ENCODE measurements at regions of chr10 and their contacts with region 1.

Region 1: GRCh38 chr10:86755740-86756510 is 494 bp upstream of the BMPR1A start:
- DNase-seq: peak; percentile 61 to 62
- H3K4me3 ChIP-seq: peak overlapping the region; percentile 78
- H3K27ac ChIP-seq: peak overlapping the region; percentile 56
- H3K4me1 ChIP-seq: peaks cover 26% of the 10 kb centered on the region
- H3K27me3 ChIP-seq: no peaks in the 10 kb centered on the region
- CTCF ChIP-seq: no peak

Region 2: GRCh38 chr10:86110156-86110786 is 645.7 kb before region 1 on chr10:
- CTCF ChIA-PET with region 1: no interaction called
- POLR2A ChIA-PET with region 1: no interaction called
- intact Hi-C with region 1: no loop called
- DNase-seq: no peak
- H3K4me3 ChIP-seq: no peak overlapping the region
- H3K27ac ChIP-seq: no peak overlapping the region
- H3K4me1 ChIP-seq: no peaks in the 10 kb centered on the region
- H3K27me3 ChIP-seq: peaks cover 6% of the 10 kb centered on the region
- CTCF ChIP-seq: no peak; the same call in 1 of the 2 replicates

Region 3: GRCh38 chr10:86710987-86711512 is 44.9 kb before region 1 on chr10:
- CTCF ChIA-PET with region 1: no interaction called
- POLR2A ChIA-PET with region 1: no interaction called
- intact Hi-C with region 1: loop called (anchors 5 kb)
- DNase-seq: peak; percentile 56 to 85
- H3K4me3 ChIP-seq: peak overlapping the region; percentile 78; the same call in 1 of the 2 replicates
- H3K27ac ChIP-seq: peak overlapping the region; percentile 34; the same call in 1 of the 2 replicates
- H3K4me1 ChIP-seq: no peaks in the 10 kb centered on the region
- H3K27me3 ChIP-seq: no peaks in the 10 kb centered on the region
- CTCF ChIP-seq: peak; percentile 70

Region 4: DNA sequence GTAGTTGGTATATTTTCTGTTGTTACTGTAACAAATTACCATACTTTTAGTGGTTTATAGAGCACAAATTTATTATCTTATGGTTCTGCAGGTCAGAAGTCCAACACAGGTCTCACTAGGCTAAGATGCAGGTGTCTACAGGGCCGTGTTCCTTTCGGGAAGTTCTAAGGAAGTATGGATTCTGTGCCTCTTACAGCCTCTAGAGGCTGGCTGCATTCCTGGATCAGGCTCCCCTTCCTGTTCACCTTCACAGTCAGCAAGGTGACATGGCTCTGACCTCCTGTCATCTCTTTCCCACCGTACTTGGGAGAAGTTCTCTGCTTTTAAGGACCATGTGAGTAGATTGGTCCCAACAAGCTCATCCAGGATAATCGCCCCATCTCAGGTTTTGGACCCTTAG is 37.8 kb after region 1 on chr10:
- CTCF ChIA-PET with region 1: interaction called, 3 read pairs
- POLR2A ChIA-PET with region 1: interaction called, 6 read pairs
- intact Hi-C with region 1: loop called (anchors 5 kb)
- DNase-seq: no peak
- H3K4me3 ChIP-seq: no peak overlapping the region
- H3K27ac ChIP-seq: no peak overlapping the region
- H3K4me1 ChIP-seq: peaks cover 9% of the 10 kb centered on the region
- H3K27me3 ChIP-seq: no peaks in the 10 kb centered on the region
- CTCF ChIP-seq: no peak

Region 5: DNA sequence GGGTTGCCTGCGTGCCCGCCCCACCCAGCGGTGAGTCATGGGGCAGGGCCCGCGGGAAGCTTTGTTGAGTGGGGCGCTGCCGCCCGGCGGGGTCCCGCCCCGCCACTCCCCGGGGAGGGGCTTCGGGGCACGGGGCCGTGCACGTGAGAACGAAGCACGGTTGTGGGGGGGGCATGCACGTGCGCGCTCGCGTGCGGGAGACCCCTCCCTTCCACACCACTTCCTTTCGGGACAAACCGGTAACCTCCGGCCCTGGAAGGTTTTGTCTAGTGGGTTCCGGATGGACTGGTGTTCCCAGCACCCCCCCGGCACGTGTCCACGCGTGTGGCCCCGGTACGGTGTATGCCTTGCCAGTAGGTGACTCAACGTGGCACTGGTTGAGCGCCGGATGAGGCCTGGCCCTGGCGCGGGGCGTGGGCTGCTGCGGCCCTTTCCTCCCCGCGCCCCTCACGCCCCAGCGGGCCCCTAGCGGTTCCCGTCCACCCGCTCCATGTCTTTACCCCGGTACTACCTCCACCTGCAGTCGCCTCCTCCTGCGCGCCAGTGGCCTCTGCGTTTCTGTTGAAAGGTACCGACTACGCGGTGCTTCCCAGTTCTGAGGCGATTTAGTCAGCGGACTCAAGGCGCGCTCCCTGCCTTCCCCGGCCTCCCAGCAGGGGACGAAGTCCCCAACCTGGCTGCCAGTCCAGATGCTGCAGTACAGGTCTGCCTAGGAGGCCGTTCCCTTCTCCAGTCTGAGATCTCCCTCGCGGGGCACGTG is 215.5 kb after region 1 on chr10:
- CTCF ChIA-PET with region 1: no interaction called
- POLR2A ChIA-PET with region 1: interaction called, 21 read pairs
- intact Hi-C with region 1: no loop called
- DNase-seq: peak; percentile 66 to 88
- H3K4me3 ChIP-seq: peak overlapping the region; percentile 81
- H3K27ac ChIP-seq: peak overlapping the region; percentile 91
- H3K4me1 ChIP-seq: peaks cover 63% of the 10 kb centered on the region
- H3K27me3 ChIP-seq: no peaks in the 10 kb centered on the region
- CTCF ChIP-seq: no peak

Region 6: DNA sequence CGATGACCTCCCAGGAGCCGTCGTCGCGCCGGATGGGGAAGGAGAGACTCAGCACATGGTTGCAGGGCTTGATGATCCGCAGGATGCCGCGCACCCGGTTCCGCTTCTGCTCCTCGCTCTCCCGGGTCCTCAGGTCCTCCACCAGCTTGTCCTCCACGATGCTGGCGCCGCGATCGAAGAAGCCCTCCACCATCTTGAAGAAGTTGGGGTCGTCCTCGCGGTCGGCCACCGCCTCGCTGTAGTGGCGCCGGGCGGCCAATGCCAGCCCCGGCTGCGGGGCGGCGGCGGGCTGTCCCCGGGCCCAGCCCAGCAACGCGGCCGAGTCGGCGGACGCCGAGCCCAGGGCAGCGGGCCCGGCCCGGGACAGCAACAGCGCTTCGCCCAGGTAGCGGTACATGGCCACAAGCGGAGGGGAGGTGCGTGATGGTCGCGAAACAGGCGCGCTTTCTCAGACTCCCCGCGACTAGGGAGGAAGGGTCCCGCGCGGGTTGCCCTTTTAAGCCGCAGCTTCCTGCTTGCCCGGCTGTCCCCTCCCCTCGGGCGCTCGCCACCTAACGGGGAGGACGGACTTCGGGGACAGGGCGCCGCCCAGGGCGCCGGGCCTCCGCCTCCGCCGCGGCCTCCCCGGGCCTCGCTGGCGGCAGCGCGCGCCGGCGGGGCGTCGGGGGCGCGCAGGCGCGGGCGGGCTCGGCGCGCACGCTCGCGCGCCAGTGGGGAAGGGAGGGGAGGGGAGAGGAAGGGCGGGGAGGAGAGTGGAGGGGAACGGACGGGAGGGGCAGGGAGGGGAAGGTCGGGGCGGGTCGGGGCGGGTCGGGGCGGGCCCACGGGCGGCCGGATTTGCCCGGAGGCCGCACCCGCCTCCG is 338.7 kb after region 1 on chr10 and contains the starts of genes GLUD1 and SHLD2:
- CTCF ChIA-PET with region 1: no interaction called
- POLR2A ChIA-PET with region 1: no interaction called
- intact Hi-C with region 1: loop called (anchors 2 kb)
- DNase-seq: peak; percentile 66 to 88
- H3K4me3 ChIP-seq: peak within 1 kb of the TSS; percentile 83
- H3K27ac ChIP-seq: peak within 1 kb of the TSS; percentile 80
- H3K4me1 ChIP-seq: peaks cover 38% of the 10 kb centered on the region
- H3K27me3 ChIP-seq: no peaks in the 10 kb centered on the region
- CTCF ChIP-seq: no peak
- total RNA-seq, gene GLUD1: 93.0 and 105 TPM in 2 replicates
- total RNA-seq, gene SHLD2: 11.3 and 15.9 TPM in 2 replicates

Measured in PC-9 (cell line).